ENCODE measurements at regions of chr17 and their contacts with region 1.

Region 1: DNA sequence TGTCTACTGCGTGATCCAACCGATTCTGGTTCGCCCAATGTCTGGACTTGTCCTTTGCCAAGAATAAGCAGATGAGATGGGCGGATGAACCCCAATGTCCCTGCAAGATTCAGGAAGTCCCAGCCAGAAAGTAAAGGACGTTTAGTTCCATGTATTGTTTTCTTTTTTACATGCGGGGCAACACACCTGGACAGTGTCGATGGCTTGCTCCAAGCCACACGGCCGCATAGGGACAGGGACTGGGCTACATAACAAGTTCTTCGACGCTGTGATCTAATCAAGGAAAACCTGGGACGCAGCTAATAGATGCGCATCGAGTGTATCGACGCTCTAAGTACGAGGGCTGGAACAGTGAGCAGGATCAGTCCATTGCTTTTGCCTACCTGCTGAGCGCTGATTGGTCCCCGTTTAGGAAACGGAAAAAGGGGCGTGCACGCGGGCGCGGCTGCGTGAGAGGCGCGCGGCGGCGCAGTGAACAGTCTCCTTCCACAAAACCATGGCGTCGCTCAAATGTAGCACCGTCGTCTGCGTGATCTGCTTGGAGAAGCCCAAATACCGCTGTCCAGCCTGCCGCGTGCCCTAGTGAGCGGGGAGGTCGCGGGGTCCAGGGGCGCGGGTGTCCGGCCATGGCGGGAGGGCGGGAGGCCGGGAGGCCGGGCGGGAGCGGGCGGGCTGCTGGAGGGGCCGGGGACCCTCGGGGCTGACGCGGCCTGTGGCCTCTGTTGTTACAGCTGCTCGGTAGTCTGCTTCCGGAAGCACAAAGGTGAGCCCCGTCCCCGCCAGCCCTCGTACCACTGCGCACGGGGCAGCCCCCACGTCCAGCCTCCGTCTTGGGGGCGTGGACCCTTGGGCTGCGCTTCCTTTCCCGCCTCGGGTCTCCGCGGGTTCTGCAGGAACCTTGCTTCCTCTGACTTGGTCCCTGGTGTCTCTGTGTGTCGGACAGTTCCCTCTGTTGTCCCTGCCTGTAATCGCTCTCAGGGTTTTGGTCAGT is at the start of gene ZNHIT3:
- DNase-seq: peak; percentile 95
- H3K4me3 ChIP-seq: peak within 1 kb of the TSS; percentile 68 to 99 (median 89)
- H3K27ac ChIP-seq: peak within 1 kb of the TSS; percentile 78 to 90 (median 84)
- H3K4me1 ChIP-seq: peaks cover 0 to 40% (median 33%) of the 10 kb centered on the region in 4 donors
- H3K27me3 ChIP-seq: peaks cover 0 to 12% (median 0%) of the 10 kb centered on the region in 3 donors
- CTCF ChIP-seq: no peak
- EP300 ChIP-seq: no peak
- POLR2A ChIP-seq: peak; percentile 26 to 34
- total RNA-seq, gene ZNHIT3: 31.0 to 59.9 (median 44.9) TPM

Region 2: DNA sequence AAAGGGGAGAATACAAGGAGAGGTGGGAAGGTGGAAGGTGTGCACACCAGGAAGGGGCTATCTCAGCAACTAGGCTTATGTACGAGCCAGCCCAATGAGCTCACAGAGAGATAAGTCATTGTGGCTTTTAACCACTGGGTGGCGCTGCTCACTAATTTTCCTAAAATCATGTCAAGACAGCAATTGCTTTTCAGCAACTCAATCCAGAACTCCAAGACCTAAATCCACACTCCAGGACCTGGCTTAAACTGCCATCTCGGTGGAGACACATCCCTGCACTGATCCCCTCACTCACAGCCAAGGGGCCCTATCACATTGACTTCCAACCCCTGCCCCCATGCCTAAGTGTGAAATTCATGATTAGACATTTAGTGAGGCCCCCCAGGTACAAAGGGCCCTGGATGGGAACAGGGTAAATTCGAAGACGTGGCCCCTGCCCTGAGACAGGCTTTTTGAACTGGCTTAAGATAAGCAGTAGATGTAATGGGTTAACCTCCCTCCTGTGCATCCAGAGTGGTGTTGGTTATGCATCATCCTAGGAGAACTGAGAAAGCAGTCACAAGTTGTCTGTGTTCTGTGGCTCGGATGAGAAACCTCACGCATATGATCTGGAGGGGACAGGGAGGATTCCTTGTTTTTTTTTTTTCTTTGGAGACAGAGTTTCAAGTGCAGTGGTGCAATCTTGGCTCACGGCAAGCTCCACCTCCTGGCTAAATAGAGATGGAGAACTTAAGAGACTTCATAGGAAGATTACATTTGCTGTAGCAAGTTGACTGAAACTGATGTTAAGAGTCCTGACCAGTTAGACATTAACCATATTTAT is 516.7 kb before region 1 on chr17:
- intact Hi-C with region 1: loop called (anchors 1 kb)
- DNase-seq: peak; percentile 83
- H3K4me3 ChIP-seq: no peak overlapping the region
- H3K27ac ChIP-seq: no peak overlapping the region
- H3K4me1 ChIP-seq: no peaks in the 10 kb centered on the region
- H3K27me3 ChIP-seq: no peaks in the 10 kb centered on the region
- CTCF ChIP-seq: peak; percentile 33 to 72 (median 69)
- EP300 ChIP-seq: no peak
- POLR2A ChIP-seq: no peak

Region 3: DNA sequence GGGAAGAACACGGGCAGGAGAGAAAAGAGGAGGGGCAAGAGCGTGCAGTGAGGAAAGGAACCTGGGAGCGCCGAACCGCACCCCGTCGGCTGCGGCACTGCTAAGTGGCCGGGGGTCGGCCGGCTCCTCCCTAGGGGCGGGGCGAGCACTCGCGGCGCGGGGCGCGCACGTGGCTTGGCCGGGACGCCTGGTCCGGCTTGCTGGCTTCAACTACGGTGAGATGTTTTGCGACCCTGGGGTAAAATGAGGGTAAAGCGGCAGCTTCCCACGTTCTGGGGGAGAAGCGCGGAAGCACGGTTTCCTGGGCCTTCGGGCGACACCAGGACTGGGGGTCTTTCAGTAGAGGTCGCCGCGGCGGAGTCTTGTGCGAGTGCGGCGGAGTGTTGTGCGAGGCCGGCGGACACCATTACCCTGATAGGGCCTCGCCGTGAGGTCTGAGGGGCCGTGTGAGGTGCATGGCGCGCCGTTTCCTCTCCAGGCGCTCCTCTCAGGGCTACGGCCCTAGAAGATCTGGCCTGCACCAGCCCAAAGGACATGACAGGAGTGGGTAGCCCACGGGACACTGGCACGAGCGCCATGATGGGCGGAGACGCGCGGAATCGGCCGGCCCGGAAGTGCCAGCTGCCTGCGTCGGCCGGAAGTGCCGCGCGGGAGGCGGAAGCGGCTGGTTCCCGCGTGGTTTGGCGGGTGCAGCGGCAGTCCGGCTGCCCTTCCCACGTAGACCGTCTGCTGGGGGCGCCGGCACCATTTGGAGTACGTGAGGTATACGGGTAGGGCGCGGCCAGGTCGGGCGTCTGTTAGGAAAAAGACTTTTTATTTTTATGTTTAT is 48.6 kb after region 1 on chr17 and contains the starts of genes MYO19 and PIGW:
- intact Hi-C with region 1: loop called (anchors 5 kb)
- DNase-seq: peak; percentile 93
- H3K4me3 ChIP-seq: peak within 1 kb of the TSS; percentile 67 to 76 (median 74)
- H3K27ac ChIP-seq: peak within 1 kb of the TSS; percentile 95 to 98 (median 96)
- H3K4me1 ChIP-seq: peaks cover 0 to 16% (median 5%) of the 10 kb centered on the region in 4 donors
- H3K27me3 ChIP-seq: no peaks in the 10 kb centered on the region
- CTCF ChIP-seq: no peak
- EP300 ChIP-seq: no peak
- POLR2A ChIP-seq: peak; percentile 89 to 91
- total RNA-seq, gene MYO19: 49.9 to 67.2 (median 59.5) TPM
- total RNA-seq, gene PIGW: 1.7 to 3.9 (median 3.0) TPM

Region 4: DNA sequence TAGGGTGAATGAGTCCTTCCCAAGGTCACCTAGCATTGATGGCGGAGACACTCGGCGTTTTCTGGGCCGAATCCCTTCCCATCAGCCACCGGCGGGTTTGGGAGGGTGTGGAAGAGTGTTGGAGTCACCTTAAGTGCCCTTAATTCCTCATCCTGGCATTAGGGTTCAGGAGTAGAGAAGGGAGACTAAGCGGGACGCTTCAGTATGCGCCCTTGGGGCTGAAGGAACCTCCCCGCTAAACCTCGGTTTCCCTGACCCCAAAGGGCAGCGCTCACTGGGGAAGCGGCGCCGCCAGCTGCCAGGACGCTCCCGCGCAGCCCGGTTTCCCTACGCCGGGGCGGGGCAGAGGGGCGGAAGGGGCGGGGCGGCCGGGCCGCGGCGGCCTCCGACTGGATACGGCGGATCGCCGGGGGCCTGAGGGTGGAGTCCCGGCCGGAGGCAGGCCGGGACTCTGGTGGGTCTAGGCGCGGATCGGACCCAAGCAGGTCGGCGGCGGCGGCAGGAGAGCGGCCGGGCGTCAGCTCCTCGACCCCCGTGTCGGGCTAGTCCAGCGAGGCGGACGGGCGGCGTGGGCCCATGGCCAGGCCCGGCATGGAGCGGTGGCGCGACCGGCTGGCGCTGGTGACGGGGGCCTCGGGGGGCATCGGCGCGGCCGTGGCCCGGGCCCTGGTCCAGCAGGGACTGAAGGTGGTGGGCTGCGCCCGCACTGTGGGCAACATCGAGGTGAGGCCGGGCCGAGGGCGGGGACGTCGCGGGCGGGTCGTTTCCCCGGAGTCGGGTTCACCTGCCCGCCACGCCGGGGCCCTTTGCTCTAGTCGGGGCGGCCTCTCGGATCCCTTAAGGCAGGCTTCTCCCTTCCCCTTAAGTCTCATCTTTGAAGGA is 105.2 kb after region 1 on chr17 and contains the start of gene DHRS11:
- intact Hi-C with region 1: loop called (anchors 10 kb)
- DNase-seq: peak; percentile 88
- H3K4me3 ChIP-seq: peak within 1 kb of the TSS; percentile 53 to 99 (median 87)
- H3K27ac ChIP-seq: peak within 1 kb of the TSS; percentile 69 to 80 (median 76)
- H3K4me1 ChIP-seq: peaks cover 0 to 20% (median 16%) of the 10 kb centered on the region in 4 donors
- H3K27me3 ChIP-seq: no peaks in the 10 kb centered on the region
- CTCF ChIP-seq: no peak
- EP300 ChIP-seq: no peak
- POLR2A ChIP-seq: no peak
- total RNA-seq, gene DHRS11: 4.3 to 8.9 (median 7.5) TPM